Left cardiac atrium (tissue), 4 donors: ENCODE measurements at regions of chr5 and their contacts with region 1.

Region 1: GRCh38 chr5:114789773-114790402 is 379.8 kb downstream of the TRIM36 start:
- DNase-seq: no peak
- ATAC-seq: peak; percentile 59 to 62

Region 2: GRCh38 chr5:113678924-113679575 is 1110.8 kb before region 1 on chr5:
- intact Hi-C with region 1: loop called (anchors 5 to 10 kb)
- DNase-seq: no peak
- ATAC-seq: peak; percentile 65 to 79

Region 3: DNA sequence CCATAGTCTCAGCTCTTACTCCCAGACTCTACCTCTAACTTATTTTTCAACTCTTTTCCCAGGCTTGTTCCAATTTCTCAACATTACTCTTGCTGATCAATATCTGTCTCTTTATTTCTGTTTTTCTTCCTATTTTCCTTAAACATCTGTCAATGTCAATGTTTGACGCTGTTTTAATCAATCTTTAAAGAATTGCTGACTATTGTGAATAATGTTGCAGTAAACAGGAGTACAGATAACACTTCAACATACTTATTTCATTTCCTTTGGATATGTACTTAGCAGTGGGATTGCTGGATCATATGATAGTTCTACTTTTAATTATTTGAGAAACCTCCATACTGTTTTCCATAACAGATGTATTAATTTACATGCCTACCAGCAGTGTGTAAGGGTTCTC is 150.8 kb after region 1 on chr5:
- intact Hi-C with region 1: no loop called
- DNase-seq: no peak
- ATAC-seq: no peak